Gastrocnemius medialis (tissue), 4 donors: ENCODE measurements at regions of chr14 and their contacts with region 1.

Region 1: DNA sequence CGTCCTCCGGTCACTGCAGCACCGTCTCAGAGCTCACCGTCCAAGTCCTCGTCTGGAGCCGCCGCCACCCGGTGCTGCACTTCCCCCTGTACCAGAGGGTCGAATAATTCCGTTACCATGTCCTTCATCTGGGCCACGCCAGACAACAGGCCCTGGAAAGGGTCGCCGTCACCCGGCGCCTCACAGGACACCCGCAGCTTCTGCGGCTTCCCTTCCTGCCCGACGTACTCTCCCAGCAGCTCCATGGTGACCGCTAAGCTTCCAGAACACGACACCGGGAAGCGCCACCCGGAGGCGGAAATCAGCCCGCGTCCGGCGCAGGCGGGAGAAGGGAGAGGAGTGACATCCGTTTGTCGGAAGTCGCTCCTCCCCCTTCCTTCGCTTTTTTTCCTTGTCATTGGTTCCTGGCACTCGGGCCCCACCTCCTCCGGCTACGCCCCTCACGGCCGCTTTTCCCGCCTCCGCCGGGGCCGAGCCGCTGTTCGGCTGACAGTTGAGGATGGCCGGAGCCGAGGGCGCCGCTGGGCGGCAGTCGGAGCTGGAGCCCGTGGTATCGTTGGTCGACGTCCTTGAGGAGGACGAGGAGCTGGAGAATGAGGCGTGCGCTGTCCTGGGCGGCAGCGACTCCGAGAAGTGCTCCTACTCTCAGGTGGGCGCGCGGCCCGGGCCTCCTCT is at the starts of genes GON7 and UBR7:
- DNase-seq: peak; percentile 94 to 95
- ATAC-seq: peak; percentile 98 to 100
- H3K4me3 ChIP-seq: peak within 1 kb of the TSS; percentile 82 to 89 (median 87)
- H3K27ac ChIP-seq: peak within 1 kb of the TSS; percentile 85 to 96 (median 88)
- H3K4me1 ChIP-seq: peaks cover 21 to 24% of the 10 kb centered on the region in 2 donors
- H3K27me3 ChIP-seq: no peaks in the 10 kb centered on the region
- CTCF ChIP-seq: peak in 3 of 5 experiments; percentile 19 to 54 (median 48)
- POLR2A ChIP-seq: peak; percentile 71 to 81
- total RNA-seq, gene GON7: 8.3 to 17.9 (median 11.1) TPM
- total RNA-seq, gene UBR7: 14.8 to 36.4 (median 27.4) TPM

Region 2: DNA sequence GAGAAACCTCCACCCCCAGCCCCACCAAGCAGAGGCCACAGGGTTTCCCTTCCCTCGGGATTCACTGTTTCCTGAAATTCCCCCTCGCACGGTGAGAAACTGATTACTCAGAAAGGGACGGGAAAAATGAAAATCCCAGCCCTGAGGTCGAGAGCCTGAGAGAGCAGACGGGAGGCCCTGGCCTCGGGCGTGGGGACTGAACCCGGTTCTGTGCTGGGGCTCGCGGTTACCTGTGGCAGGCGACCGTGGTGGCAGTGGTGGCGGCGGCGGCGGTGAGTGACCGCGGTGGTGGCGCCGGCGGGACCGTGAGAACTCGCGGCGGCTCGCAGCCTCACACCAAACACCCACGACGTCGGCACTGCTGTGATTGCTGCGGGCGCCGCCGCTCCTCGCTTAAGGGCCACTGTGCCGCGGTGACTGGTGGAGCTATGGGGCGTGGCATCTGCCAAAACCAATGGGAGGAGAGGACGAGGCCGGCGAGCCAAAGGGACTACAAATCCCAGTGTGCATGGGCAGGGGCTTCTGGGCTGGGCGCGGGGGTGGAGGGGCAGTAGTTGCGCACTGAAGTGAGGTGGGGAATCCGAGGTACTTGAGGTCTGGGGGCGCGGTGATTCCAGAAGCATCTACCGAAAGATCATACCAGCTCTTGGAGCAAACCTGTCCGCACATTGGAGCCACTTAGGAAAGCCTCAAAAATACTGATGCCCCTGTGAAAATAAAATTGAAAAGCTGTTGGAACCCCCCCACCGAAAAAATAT is 458.5 kb before region 1 on chr14 and contains the start of gene LGMN:
- in situ Hi-C with region 1: no loop called
- intact Hi-C with region 1: loop called (anchors 5 kb)
- DNase-seq: peak; percentile 97 to 98
- ATAC-seq: peak; percentile 99
- H3K4me3 ChIP-seq: peak within 1 kb of the TSS; percentile 67 to 99 (median 90)
- H3K27ac ChIP-seq: peak within 1 kb of the TSS; percentile 86 to 98 (median 90)
- H3K4me1 ChIP-seq: peaks cover 8 to 13% of the 10 kb centered on the region in 2 donors
- H3K27me3 ChIP-seq: no peaks in the 10 kb centered on the region
- CTCF ChIP-seq: no peak
- POLR2A ChIP-seq: peak; percentile 94 to 99
- total RNA-seq, gene LGMN: 53.5 to 78.5 (median 62.8) TPM

Region 3: GRCh38 chr14:93115069-93115820 is 91.7 kb before region 1 on chr14:
- in situ Hi-C with region 1: no loop called
- intact Hi-C with region 1: loop called (anchors 1 kb)
- DNase-seq: peak; percentile 71 to 78
- ATAC-seq: peak; percentile 77 to 80
- H3K4me3 ChIP-seq: peak overlapping the region; percentile 83 to 94 (median 92)
- H3K27ac ChIP-seq: peak overlapping the region; percentile 95 to 96 (median 96)
- H3K4me1 ChIP-seq: peaks cover 24 to 29% of the 10 kb centered on the region in 2 donors
- H3K27me3 ChIP-seq: no peaks in the 10 kb centered on the region
- CTCF ChIP-seq: peak in 2 of 5 experiments; percentile 3 to 7
- POLR2A ChIP-seq: peak; percentile 58 to 69

Region 4: DNA sequence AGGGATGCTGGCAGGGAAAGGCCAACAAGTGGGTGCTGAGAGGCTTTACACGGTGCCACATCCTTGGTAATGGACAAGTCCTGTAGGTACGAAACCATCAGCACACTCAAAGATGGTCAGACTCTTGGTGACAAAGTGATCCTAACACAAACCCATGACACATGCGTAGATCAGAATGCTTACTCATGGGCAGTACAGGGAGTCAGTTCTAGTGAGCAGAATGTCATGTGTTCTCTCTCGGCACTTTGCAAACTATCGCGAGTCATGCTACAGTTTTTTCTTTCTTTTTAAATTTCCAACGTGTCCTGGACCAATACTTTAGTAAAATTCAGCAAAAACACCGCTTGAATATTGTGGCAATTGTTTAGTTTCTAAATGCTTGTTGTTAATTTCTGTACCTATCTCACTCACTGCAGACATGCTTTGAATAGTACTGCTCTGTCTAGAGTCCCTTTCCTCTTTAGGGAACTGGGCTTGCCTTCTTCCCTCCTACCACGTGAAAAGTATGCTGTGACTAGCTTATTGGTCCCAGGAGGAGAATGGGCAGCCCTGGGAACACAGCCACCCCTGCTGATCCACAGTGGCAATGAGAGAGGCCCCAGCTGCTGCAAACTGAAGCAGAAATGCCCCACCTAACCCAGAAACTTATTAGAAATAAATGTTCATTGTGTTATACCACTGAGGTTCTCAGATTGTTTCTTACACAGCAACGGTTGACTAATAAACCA is 62.6 kb after region 1 on chr14:
- in situ Hi-C with region 1: no loop called
- intact Hi-C with region 1: no loop called
- DNase-seq: peak in 1 of 2 donors; percentile 19
- ATAC-seq: peak; percentile 56 to 70
- H3K4me3 ChIP-seq: no peak overlapping the region
- H3K27ac ChIP-seq: peak overlapping the region; percentile 31 to 67 (median 46)
- H3K4me1 ChIP-seq: peaks cover 12 to 17% of the 10 kb centered on the region in 2 donors
- H3K27me3 ChIP-seq: no peaks in the 10 kb centered on the region
- CTCF ChIP-seq: no peak
- POLR2A ChIP-seq: no peak

Region 5: DNA sequence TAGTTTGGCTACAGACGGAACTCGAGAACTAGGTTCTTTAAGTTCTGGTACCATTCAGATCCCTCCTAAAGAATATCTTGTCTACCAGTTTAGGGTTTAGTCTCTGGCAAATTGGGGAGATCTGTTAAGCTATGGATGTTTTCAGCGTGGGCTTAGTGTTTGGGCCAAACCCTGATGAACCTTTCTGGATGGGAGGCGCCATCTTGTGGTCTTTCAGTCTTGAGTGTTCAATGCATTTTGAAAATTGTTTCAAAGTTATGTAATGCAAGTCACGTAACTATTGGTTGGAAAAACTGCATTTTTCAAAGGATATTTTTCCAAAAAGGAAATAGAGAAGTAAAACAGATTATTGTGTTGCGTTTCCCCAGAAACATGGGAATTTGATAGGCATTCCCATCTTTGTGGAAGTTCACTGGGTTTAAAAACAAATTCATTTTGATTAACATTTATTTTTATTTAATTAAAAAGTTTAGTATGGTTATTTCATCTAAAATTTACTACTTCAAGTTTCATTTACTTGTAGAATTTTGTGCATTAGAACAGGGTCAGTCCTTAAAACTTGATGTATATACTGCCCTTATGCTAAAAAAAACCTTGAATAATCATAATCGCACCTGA is 412.4 kb after region 1 on chr14:
- in situ Hi-C with region 1: loop called in 1 of 4 experiments (anchors 25 kb)
- intact Hi-C with region 1: no loop called
- DNase-seq: no peak
- ATAC-seq: no peak
- H3K4me3 ChIP-seq: no peak overlapping the region
- H3K27ac ChIP-seq: no peak overlapping the region
- H3K4me1 ChIP-seq: no peaks in the 10 kb centered on the region
- H3K27me3 ChIP-seq: no peaks in the 10 kb centered on the region
- CTCF ChIP-seq: peak in 2 of 5 experiments; percentile 21 to 45
- POLR2A ChIP-seq: no peak